PC-9 (cell line): ENCODE measurements at regions of chr3 and their contacts with region 1.

Region 1: DNA sequence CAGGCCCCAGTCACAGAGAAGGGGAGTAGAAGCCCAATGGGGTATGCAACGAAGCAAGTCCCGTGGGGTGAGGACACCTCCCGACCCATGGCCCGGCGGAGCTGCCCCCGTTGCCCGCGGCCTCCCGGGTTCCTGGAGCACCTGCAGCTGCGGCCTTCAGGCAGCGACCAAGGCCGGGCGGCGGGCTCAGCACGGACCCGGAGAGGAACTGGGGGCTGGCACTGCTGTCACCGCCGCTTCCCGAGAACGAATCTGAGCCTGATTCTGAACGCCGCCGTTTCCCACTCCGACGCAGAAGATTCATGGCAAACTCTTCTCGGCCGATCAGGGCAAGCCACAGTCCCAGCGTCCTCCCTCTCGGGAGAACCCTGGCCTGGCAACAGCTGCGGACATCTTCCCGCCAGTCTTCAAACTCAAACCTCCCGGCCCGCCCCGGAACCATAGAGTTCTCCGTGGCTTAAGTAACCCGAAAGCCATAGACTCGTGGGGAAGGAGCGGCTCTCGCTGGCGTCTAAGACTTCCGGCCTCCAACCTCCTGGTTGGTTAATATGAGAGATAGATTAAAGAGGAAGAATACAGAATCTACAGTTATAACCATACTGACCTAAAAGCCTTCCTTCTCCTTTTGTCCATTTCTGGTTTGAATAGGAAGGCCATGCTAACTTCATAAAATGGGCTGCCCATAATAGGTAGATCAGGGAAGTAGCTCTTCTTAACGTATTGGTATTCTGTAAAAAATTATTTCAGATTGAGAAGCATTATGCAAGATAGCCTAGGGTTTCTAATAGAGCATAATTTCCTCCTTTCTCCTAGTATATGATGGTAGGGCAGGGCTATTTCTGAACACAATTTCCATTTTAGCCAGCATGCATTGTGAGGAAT is at the start of gene POLQ:
- DNase-seq: peak; percentile 85 to 88
- H3K4me3 ChIP-seq: peak within 1 kb of the TSS; percentile 62
- H3K27ac ChIP-seq: peak within 1 kb of the TSS; percentile 24; the same call in 1 of the 2 replicates
- H3K4me1 ChIP-seq: peaks cover 8% of the 10 kb centered on the region; the same call in 1 of the 2 replicates
- H3K27me3 ChIP-seq: no peaks in the 10 kb centered on the region
- CTCF ChIP-seq: no peak
- total RNA-seq, gene POLQ: 14.3 and 15.6 TPM in 2 replicates

Region 2: DNA sequence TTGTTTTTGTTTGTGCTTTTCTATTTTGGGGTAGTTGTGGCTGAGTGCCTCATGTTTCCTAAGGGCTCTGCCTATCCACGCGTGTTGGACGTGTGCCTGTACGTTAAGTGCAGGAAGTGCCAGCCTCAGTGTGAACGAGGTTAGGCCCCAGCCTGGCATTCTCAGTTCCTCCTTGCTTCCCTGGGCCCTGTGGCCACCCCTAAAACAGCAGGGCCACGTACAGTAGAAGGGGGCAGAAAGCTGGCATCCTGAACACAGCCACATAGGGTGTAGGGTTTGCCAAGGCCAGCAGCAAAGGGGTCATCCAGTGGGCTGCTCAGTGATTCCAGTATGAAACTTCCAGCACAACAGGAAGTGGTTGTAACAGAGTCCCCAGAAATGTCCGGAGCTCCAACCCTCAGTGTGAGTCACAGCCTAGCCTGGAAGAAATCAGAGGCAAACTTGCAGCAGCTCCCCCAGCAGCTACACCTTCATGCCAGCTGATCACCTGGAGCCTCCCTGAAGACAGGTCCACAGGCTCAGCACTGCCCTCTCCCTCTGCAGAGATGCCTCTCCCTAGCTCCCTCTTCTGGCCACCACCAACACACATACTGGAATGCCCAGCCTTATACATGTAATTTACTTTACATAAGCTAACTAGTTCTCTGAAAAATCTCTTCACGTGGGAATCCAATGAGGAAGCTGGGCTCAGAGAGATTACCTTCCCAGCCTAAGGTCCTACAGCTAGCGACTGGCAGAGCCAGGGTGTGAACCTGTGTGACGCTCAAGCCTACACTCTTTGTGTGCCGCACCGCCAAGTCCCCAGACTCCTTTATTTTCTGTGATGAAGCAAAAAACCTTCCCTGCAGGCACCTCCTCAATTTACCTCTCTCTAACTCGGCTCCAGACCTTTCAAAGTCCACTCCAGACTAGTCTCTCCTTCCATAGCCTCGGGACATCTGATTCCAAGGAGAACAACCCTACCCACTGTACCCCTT is 449.6 kb after region 1 on chr3:
- CTCF ChIA-PET with region 1: interaction called, 5 read pairs
- POLR2A ChIA-PET with region 1: no interaction called
- intact Hi-C with region 1: loop called (anchors 1 kb)
- DNase-seq: peak; percentile 74 to 84
- H3K4me3 ChIP-seq: no peak overlapping the region
- H3K27ac ChIP-seq: peak overlapping the region; percentile 56
- H3K4me1 ChIP-seq: peaks cover 12% of the 10 kb centered on the region; the same call in 1 of the 2 replicates
- H3K27me3 ChIP-seq: no peaks in the 10 kb centered on the region
- CTCF ChIP-seq: peak; percentile 69

Region 3: GRCh38 chr3:122258757-122259371 is 713.0 kb after region 1 on chr3:
- CTCF ChIA-PET with region 1: interaction called, 3 read pairs
- POLR2A ChIA-PET with region 1: no interaction called
- intact Hi-C with region 1: loop called (anchors 1 kb)
- DNase-seq: peak; percentile 37 to 57
- H3K4me3 ChIP-seq: no peak overlapping the region
- H3K27ac ChIP-seq: no peak overlapping the region
- H3K4me1 ChIP-seq: no peaks in the 10 kb centered on the region
- H3K27me3 ChIP-seq: peaks cover 38% of the 10 kb centered on the region
- CTCF ChIP-seq: peak; percentile 65

Region 4: DNA sequence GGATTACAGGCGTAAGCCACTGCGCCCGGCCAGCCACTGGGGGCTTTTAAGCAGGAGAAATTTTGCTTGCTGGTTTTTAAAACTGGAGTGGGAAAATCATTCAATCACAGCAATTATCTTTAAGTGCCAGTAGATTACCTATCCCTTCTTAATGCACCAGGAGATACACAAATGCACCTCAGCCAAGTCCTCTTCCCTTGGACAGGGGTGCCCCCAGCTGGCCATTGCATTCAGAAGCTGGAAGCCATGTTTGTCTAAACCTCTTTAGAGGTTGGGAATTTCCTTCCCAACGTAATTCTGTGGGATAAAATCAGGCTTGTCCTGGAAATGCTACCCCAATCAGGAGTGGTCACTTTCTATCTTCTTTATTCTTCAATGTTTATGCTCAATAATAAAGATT is 810.6 kb after region 1 on chr3:
- CTCF ChIA-PET with region 1: no interaction called
- POLR2A ChIA-PET with region 1: no interaction called
- intact Hi-C with region 1: loop called (anchors 2 kb)
- DNase-seq: peak; percentile 49 to 55
- H3K4me3 ChIP-seq: no peak overlapping the region
- H3K27ac ChIP-seq: no peak overlapping the region
- H3K4me1 ChIP-seq: no peaks in the 10 kb centered on the region
- H3K27me3 ChIP-seq: no peaks in the 10 kb centered on the region
- CTCF ChIP-seq: peak; percentile 67

Region 5: DNA sequence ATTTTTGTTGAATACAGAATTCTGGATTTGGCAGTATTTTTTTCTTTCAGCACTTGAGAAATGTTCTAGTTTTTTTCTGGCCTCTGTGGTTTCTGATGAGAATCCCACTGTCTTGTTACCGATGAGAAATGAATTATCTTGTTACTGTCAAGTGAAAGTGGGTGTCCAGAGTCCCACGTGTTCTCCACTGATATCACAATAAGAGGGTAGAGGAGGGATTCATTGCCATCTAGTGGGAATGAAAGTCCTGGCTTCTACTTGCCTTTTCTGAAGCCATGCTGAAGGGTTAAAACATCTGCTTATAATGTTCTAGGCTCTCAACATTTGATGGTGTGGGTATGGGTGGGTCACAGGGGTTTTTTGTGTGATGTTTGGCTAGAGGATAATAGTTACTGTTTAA is 1722.0 kb after region 1 on chr3:
- CTCF ChIA-PET with region 1: no interaction called
- POLR2A ChIA-PET with region 1: no interaction called
- intact Hi-C with region 1: loop called (anchors 10 kb)
- DNase-seq: no peak
- H3K4me3 ChIP-seq: no peak overlapping the region
- H3K27ac ChIP-seq: no peak overlapping the region
- H3K4me1 ChIP-seq: peaks cover 8% of the 10 kb centered on the region
- H3K27me3 ChIP-seq: no peaks in the 10 kb centered on the region
- CTCF ChIP-seq: no peak